Uterus (tissue), 4 donors: ENCODE measurements at regions of chr17 and their contacts with region 1.

Region 1: GRCh38 chr17:48878918-48879898 is 13.4 kb upstream of the ATP5MC1 start:
- DNase-seq: peak; percentile 39 to 54
- H3K4me3 ChIP-seq: no peak overlapping the region
- H3K27ac ChIP-seq: no peak overlapping the region
- H3K4me1 ChIP-seq: no peaks in the 10 kb centered on the region
- H3K27me3 ChIP-seq: no peaks in the 10 kb centered on the region
- CTCF ChIP-seq: peak; percentile 84 to 93 (median 88)
- POLR2A ChIP-seq: no peak

Region 2: DNA sequence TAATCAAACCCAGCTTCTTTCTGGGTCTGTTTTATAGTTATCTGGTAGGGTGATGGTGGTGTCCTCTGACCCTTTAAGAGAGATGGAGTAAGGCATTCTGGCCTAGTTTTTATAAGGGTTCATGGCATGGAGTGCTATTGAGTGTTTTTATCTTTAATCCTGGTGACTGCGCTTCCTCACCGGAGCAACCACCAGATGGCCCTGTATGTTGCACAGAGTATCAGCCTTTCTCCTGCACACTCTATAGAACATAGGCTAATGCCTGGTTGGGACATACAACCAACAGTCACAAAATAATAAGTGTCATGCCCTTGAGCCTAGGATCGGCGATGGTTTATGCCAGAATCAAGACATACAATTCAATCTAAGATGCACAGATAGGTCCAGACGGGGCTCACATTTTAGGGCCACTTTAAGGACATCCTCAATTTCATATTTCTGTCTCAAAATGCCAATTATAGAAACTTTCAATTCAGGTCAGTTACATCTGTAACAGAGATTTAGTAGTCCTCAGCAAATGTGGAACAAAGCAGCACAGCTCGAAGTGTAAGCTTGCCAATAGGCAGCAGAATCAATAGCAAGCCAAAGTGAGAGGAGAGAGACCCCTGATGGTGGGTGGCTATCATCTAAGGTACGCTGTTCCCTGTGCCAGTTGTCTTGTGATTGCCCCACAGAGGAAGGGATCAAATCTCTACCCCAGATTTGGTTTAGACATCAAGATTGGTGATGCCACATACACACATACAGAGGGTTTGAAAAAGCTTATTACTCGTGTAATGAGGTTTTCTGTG is 215.9 kb before region 1 on chr17:
- intact Hi-C with region 1: loop called (anchors 10 kb)
- DNase-seq: no peak
- H3K4me3 ChIP-seq: no peak overlapping the region
- H3K27ac ChIP-seq: no peak overlapping the region
- H3K4me1 ChIP-seq: no peaks in the 10 kb centered on the region
- H3K27me3 ChIP-seq: no peaks in the 10 kb centered on the region
- CTCF ChIP-seq: no peak
- POLR2A ChIP-seq: no peak

Region 3: GRCh38 chr17:48724251-48725003 is 154.8 kb before region 1 on chr17:
- intact Hi-C with region 1: loop called (anchors 5 kb)
- DNase-seq: peak; percentile 83 to 84
- H3K4me3 ChIP-seq: no peak overlapping the region
- H3K27ac ChIP-seq: no peak overlapping the region
- H3K4me1 ChIP-seq: no peaks in the 10 kb centered on the region
- H3K27me3 ChIP-seq: peaks cover 44 to 96% of the 10 kb centered on the region in 2 donors
- CTCF ChIP-seq: peak; percentile 62 to 73 (median 72)
- POLR2A ChIP-seq: no peak

Region 4: GRCh38 chr17:48816774-48817590 is 62.2 kb before region 1 on chr17 and contains the start of gene TTLL6:
- intact Hi-C with region 1: loop called (anchors 5 kb)
- DNase-seq: peak; percentile 74 to 80
- H3K4me3 ChIP-seq: peak within 1 kb of the TSS; percentile 15 to 36
- H3K27ac ChIP-seq: no peak within 1 kb of the TSS
- H3K4me1 ChIP-seq: peaks cover 0 to 4% of the 10 kb centered on the region in 2 donors
- H3K27me3 ChIP-seq: no peaks in the 10 kb centered on the region
- CTCF ChIP-seq: no peak
- POLR2A ChIP-seq: no peak
- total RNA-seq, gene TTLL6: 0.41 to 0.91 TPM in 2 of 4 donors, not detected in the others

Region 5: GRCh38 chr17:48961516-48962233 is 82.5 kb after region 1 on chr17:
- intact Hi-C with region 1: no loop called
- DNase-seq: no peak
- H3K4me3 ChIP-seq: no peak overlapping the region
- H3K27ac ChIP-seq: no peak overlapping the region
- H3K4me1 ChIP-seq: no peaks in the 10 kb centered on the region
- H3K27me3 ChIP-seq: no peaks in the 10 kb centered on the region
- CTCF ChIP-seq: no peak
- POLR2A ChIP-seq: no peak